Sciatic nerve (tissue), 2 donors: ENCODE measurements at regions of chr20 and their contacts with region 1.

Region 1: DNA sequence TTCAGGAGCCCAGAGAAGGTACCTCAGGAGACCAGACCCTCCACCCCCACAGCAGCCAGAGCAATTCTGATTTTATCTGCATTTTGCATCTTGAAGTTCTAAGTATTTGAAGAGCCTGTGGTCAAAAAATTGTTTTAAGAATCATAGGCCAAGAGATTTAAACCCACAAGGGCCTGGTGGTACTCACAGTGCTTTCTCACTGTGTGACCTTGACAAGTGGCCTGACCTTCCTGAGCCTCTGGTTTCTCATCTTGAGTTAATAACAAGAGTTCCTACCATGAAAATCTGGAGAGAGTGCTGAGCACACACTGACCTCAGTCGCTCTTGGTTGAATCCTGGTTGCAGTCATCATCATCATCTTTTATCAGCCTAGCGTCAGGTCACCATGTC is 45.4 kb upstream of the ID1 start:
- DNase-seq: no peak
- ATAC-seq: no peak

Region 2: DNA sequence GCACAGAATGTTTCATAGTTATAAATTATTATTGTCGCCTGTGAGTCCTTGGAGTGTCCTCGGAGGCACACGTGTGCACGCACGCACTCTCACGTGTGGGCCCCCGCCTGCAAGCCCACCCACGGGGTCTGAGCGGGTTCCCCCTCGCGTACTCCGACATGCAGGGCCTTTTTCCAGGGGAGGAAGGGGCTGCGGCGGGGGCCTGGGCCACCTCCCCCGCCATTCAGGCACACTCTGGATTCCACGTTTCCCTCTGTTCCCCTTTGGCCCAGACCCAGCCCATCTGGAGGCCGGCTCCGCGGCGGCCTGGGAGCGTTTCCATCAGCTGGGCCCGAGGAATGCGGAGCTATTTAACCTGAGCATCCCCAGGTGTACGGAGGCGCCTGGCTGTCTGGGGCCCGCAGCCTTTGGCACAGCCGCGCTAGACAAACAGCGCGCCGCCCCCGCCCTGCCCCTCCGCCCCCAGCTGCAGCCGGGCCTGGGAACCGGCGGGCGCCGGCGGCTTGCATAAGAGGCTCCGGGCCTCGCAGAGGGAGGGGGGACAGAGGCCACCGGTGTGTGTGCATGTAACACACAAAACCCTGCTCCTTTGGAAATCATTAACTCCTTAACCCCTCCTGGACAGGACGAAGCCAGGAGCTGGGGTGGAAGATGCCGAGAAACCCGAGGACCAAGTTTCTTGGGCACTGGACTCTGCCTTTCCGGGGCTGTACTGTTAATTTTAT is 48.7 kb after region 1 on chr20:
- intact Hi-C with region 1: loop called (anchors 2 kb)
- DNase-seq: peak; percentile 86
- ATAC-seq: peak; percentile 46

Region 3: GRCh38 chr20:31723319-31724078 is 163.8 kb after region 1 on chr20:
- intact Hi-C with region 1: loop called (anchors 1 kb)
- DNase-seq: peak; percentile 99
- ATAC-seq: peak; percentile 96